Activated T-helper 1 cell treated with anti-CD3 and anti-CD28 coated beads, Interleukin-12 subunit alpha, Interleukin-12 subunit beta, Interleukin-2, Interleukin-4 antibody, amounts not matched to agents 30 ng/mL and 10 ng/mL and 1 ng/mL, durations not matched to agents 14 hours and 24 hours and 36 hours (primary cell): ENCODE measurements at regions of chr5 and their contacts with region 1.

Region 1: DNA sequence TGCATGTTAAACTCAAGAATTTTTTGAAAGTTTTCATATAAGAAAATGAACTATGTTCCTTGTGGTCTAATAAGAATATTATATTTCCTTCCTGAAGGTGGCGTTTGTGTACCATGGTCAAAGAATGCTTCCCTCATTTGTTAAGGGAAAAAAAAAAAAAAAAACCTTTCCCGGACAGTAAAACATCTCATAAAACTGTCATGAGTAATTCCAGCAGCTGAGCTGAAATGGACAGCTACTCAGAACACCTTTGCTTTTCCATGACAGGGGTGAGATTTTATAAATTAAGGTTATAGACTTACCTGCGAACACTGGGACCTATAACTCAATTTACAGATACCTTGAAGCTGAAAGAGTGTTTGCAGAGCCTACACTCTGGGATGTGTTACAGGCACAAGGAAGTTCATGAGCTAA is 113.2 kb upstream of the RANBP3L start:
- DNase-seq: no peak
- H3K4me3 Mint-ChIP-seq: no peak overlapping the region
- H3K27ac Mint-ChIP-seq: no peak overlapping the region
- H3K4me1 Mint-ChIP-seq: peaks cover 7% of the 10 kb centered on the region
- H3K27me3 Mint-ChIP-seq: peaks cover 4% of the 10 kb centered on the region

Region 2: GRCh38 chr5:36507332-36507952 is 92.6 kb after region 1 on chr5:
- intact Hi-C with region 1: loop called (anchors 1 kb)
- DNase-seq: peak; percentile 47
- H3K4me3 Mint-ChIP-seq: no peak overlapping the region
- H3K27ac Mint-ChIP-seq: no peak overlapping the region
- H3K4me1 Mint-ChIP-seq: no peaks in the 10 kb centered on the region
- H3K27me3 Mint-ChIP-seq: peaks cover 9% of the 10 kb centered on the region

Region 3: DNA sequence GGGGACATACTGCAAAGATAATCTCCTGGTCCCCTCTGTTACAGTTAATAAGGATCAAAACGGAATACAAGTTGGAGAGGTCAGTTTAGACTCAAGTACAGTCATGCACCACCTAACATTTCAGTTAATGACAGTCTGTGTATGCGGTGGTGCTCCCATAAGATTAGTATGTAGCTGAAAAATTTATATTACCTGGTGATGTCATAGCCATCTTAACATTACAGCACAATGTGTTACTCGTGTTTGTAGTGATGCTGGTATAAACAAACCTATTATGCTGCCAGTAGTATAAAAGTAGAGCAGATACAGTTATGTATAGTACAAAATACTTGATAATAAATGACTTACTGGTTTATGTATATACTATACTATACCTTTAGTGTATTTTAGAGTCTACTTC is 1217.1 kb after region 1 on chr5:
- intact Hi-C with region 1: no loop called
- DNase-seq: no peak
- H3K4me3 Mint-ChIP-seq: no peak overlapping the region
- H3K27ac Mint-ChIP-seq: no peak overlapping the region
- H3K4me1 Mint-ChIP-seq: no peaks in the 10 kb centered on the region
- H3K27me3 Mint-ChIP-seq: no peaks in the 10 kb centered on the region